Common myeloid progenitor, CD34-positive (primary cell): ENCODE measurements at regions of chr2 and their contacts with region 1.

Region 1: DNA sequence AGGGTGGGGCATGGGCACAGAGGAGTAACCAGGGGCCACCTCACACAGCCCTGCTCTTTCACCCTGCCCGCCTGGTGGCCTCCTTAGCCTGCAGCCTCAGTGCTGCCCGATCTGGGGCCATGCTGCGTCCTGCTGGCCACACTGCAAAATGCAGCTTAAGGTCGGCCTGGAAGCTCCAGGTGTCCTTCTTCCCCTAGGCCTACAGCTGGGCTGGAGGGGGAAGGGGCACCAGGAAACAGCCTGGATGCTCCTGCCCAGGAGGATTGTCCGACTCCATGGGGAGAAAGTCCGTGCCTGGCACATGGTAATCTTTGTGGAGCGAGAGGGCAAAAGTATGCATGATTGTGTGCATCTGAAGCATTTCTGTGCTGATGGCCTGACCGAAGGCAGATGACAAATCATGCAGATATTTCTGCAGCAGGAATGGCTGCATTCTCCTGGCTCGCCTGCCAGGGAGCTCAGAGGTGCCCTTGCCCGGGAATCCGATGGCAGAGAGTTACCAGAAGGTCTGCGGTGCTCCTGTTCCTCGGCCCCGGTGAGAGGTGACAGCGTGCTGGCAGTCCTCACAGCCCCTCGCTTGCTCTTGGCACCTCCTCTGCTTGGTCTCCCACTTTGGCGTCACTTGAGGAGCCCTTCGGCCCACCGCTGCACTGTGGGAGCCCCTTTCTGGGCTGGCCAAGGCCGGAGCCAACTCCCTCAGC is 12.8 kb upstream of the ALPP start:
- DNase-seq: no peak
- H3K4me3 ChIP-seq: peak overlapping the region in 1 of 7 experiments; percentile 23
- H3K27ac ChIP-seq: no peak overlapping the region
- H3K4me1 ChIP-seq: peaks cover 0 to 59% (median 41%) of the 10 kb centered on the region in 4 experiments
- H3K27me3 ChIP-seq: no peaks in the 10 kb centered on the region

Region 2: GRCh38 chr2:232339121-232340081 is 26.4 kb before region 1 on chr2:
- CTCF ChIA-PET with region 1: interaction called, 47 read pairs
- POLR2A ChIA-PET with region 1: no interaction called
- DNase-seq: no peak
- H3K4me3 ChIP-seq: no peak overlapping the region
- H3K27ac ChIP-seq: no peak overlapping the region
- H3K4me1 ChIP-seq: peaks cover 0 to 5% (median 4%) of the 10 kb centered on the region in 4 experiments
- H3K27me3 ChIP-seq: peaks cover 0 to 10% (median 4%) of the 10 kb centered on the region in 5 experiments

Region 3: DNA sequence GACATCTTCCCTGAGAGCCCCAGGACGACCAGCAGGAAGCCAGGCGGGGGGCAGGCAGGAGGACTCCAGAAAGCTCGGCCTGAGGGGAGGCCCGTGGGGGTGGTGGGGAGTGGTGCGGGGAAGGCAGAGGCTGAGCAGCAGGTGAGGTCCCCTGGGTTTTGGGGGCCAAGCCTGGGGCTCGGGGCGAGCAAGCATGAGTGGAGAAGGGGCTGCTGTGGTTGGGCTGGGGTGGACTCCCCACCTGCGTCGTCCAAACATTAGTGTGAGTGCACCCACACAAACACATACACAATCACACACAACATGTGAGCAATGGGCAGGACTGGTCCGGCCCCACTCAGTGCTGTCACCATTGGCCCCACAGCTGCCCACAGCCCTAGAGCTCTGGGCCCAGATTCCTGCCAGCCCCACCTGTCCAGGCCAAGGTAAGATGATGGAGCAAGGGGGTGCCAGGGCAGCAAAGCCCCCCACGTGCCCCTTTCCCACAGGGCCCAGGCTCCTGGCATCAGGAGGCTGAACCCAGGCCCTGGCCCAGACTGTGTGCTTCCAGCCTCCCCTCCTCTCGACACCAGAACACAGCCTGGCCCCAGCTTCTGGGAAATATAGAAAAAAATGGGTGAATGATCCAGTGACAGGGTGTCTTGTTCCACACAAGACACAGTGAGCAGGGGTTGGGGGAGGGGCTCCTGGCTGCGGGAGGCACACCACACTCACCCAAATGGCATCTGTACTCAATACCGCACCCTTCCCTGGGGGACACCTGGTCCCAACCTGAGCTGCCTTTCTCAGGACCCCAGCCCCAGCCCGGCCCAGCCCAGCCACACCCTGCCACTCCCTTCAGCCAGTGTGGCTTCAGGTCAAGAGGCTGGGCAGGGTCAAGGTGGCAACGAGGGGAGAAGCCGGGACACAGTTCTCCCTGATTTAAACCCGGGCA is 12.3 kb after region 1 on chr2:
- CTCF ChIA-PET with region 1: interaction called, 18 read pairs
- POLR2A ChIA-PET with region 1: no interaction called
- DNase-seq: no peak
- H3K4me3 ChIP-seq: no peak overlapping the region
- H3K27ac ChIP-seq: no peak overlapping the region
- H3K4me1 ChIP-seq: peaks cover 0 to 6% (median 3%) of the 10 kb centered on the region in 4 experiments
- H3K27me3 ChIP-seq: peaks cover 0 to 3% (median 0%) of the 10 kb centered on the region in 5 experiments

Region 4: DNA sequence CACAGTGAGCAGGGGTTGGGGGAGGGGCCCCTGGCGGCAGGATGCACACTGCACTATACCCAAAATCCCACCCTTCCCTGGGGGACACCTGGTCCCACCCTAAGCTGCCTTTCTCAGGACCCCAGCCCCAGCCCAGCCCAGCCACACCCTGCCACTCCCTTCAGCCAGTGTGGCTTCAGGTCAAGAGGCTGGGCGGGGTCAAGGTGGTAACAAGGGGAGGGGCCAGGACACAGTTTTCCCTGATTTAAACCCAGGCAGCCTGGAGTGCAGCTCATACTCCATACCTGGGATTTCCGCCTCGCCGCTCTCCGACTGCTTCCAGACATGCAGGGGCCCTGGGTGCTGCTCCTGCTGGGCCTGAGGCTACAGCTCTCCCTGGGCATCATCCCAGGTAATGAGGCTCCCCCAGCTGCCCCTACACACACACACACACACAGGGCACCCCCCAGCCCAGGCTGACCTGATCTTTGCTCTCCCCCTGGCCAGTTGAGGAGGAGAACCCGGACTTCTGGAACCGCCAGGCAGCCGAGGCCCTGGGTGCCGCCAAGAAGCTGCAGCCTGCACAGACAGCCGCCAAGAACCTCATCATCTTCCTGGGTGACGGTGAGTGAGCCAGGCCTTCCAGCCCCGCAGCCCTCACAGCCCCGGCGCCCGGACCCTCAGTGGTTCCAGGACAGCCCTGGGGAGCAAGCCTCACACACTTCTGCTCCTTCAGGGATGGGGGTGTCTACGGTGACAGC is 41.0 kb after region 1 on chr2 and contains the start of gene ALPG:
- CTCF ChIA-PET with region 1: no interaction called
- POLR2A ChIA-PET with region 1: no interaction called
- DNase-seq: no peak
- H3K4me3 ChIP-seq: no peak within 1 kb of the TSS
- H3K27ac ChIP-seq: no peak within 1 kb of the TSS
- H3K4me1 ChIP-seq: no peaks in the 10 kb centered on the region
- H3K27me3 ChIP-seq: no peaks in the 10 kb centered on the region